ENCODE measurements at regions of chr15 and their contacts with region 1.

Region 1: DNA sequence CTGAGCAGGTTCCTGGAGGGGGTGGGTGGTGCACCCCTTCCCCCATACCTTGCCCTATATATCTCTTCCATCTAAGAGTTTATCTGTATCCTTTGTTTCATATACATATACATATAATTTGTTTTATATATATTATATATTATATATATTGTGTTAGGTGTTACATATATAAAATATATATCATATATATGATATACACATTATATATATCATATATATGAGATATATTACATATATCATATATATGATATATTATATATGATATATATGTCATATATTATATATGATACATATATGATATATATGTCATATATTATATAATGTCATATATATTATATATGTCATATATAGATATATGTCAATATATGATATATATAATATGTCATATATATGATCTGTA is 31.1 kb downstream of the EXD1 start:
- DNase-seq: no peak
- H3K4me3 ChIP-seq: no peak overlapping the region
- H3K27ac ChIP-seq: no peak overlapping the region
- H3K4me1 ChIP-seq: no peaks in the 10 kb centered on the region
- H3K27me3 ChIP-seq: no peaks in the 10 kb centered on the region
- CTCF ChIP-seq: no peak

Region 2: GRCh38 chr15:41032079-41032328 is 167.5 kb before region 1 on chr15:
- CTCF ChIA-PET with region 1: no interaction called
- POLR2A ChIA-PET with region 1: interaction called, 10 read pairs
- intact Hi-C with region 1: no loop called
- DNase-seq: no peak
- H3K4me3 ChIP-seq: no peak overlapping the region
- H3K27ac ChIP-seq: no peak overlapping the region
- H3K4me1 ChIP-seq: peaks cover 9% of the 10 kb centered on the region
- H3K27me3 ChIP-seq: no peaks in the 10 kb centered on the region
- CTCF ChIP-seq: no peak

Region 3: GRCh38 chr15:41150279-41150678 is 49.2 kb before region 1 on chr15:
- CTCF ChIA-PET with region 1: no interaction called
- POLR2A ChIA-PET with region 1: no interaction called
- intact Hi-C with region 1: no loop called
- DNase-seq: no peak
- H3K4me3 ChIP-seq: no peak overlapping the region
- H3K27ac ChIP-seq: no peak overlapping the region
- H3K4me1 ChIP-seq: no peaks in the 10 kb centered on the region
- H3K27me3 ChIP-seq: no peaks in the 10 kb centered on the region
- CTCF ChIP-seq: no peak

Measured in A673 (cell line).